Gastrocnemius medialis (tissue), 4 donors: ENCODE measurements at regions of chr17 and their contacts with region 1.

Region 1: GRCh38 chr17:36829676-36830075 is 107.6 kb upstream of the LHX1 start:
- DNase-seq: no peak
- ATAC-seq: no peak
- H3K4me3 ChIP-seq: no peak overlapping the region
- H3K27ac ChIP-seq: no peak overlapping the region
- H3K4me1 ChIP-seq: no peaks in the 10 kb centered on the region
- H3K27me3 ChIP-seq: peaks cover 15 to 28% (median 25%) of the 10 kb centered on the region in 3 donors
- CTCF ChIP-seq: no peak
- POLR2A ChIP-seq: no peak

Region 2: GRCh38 chr17:36784633-36785032 is 45.0 kb before region 1 on chr17:
- in situ Hi-C with region 1: loop called in 1 of 4 experiments (anchors 5 kb)
- intact Hi-C with region 1: no loop called
- DNase-seq: no peak
- ATAC-seq: no peak
- H3K4me3 ChIP-seq: no peak overlapping the region
- H3K27ac ChIP-seq: no peak overlapping the region
- H3K4me1 ChIP-seq: no peaks in the 10 kb centered on the region
- H3K27me3 ChIP-seq: peaks cover 7 to 17% (median 8%) of the 10 kb centered on the region in 3 donors
- CTCF ChIP-seq: no peak
- POLR2A ChIP-seq: no peak